Sigmoid colon (tissue), 7 donors: ENCODE measurements at regions of chr3 and their contacts with region 1.

Region 1: GRCh38 chr3:43621656-43622432 is at the start of gene ANO10:
- DNase-seq: peak; percentile 99
- H3K4me3 ChIP-seq: peak within 1 kb of the TSS; percentile 64 to 90 (median 83)
- H3K27ac ChIP-seq: peak within 1 kb of the TSS; percentile 82 to 92 (median 90)
- H3K4me1 ChIP-seq: peaks cover 0 to 16% (median 12%) of the 10 kb centered on the region in 4 donors
- H3K27me3 ChIP-seq: no peaks in the 10 kb centered on the region
- CTCF ChIP-seq: no peak
- EP300 ChIP-seq: no peak
- POLR2A ChIP-seq: peak; percentile 40
- total RNA-seq, gene ANO10: 14.5 to 30.5 (median 17.5) TPM

Region 2: DNA sequence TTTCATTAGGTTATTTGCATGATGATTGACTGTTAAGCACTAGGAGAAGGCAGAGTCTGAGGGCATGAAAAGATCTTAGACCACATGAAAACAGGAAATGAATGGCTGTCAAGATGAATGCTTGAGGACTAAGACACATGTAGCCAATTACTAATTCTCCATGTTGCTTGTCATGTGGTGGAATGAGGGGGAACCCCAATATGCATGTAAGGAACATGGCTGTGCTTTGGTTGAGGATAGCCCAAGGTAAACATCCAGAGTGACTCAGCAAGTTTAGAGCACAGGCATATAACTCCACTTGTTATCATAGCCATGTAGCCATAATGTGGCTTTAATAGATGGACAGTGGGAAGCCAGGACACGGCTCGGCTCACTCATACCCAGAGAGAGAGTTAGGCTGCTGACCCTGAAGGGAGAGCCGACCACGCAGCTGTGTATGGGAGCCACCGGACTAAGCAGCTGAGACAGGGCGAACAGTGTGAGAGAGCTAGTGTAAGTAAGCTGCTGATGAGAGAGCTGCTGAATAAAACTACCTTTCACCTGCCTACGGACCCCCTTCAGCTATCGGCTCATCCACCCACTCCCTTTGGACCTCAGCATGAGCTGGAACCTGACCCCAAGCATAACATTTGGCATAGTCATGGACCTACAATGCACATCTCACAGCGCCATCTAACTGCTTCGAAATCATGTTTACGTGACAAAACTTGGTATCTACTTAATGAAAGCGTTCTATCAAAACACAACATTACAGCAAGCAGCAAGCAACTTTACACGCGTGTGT is 37.6 kb before region 1 on chr3:
- intact Hi-C with region 1: loop called (anchors 5 kb)
- DNase-seq: no peak
- H3K4me3 ChIP-seq: no peak overlapping the region
- H3K27ac ChIP-seq: peak overlapping the region in 1 of 4 donors; percentile 70
- H3K4me1 ChIP-seq: peaks cover 0 to 27% (median 22%) of the 10 kb centered on the region in 4 donors
- H3K27me3 ChIP-seq: no peaks in the 10 kb centered on the region
- CTCF ChIP-seq: no peak
- EP300 ChIP-seq: no peak
- POLR2A ChIP-seq: no peak

Region 3: DNA sequence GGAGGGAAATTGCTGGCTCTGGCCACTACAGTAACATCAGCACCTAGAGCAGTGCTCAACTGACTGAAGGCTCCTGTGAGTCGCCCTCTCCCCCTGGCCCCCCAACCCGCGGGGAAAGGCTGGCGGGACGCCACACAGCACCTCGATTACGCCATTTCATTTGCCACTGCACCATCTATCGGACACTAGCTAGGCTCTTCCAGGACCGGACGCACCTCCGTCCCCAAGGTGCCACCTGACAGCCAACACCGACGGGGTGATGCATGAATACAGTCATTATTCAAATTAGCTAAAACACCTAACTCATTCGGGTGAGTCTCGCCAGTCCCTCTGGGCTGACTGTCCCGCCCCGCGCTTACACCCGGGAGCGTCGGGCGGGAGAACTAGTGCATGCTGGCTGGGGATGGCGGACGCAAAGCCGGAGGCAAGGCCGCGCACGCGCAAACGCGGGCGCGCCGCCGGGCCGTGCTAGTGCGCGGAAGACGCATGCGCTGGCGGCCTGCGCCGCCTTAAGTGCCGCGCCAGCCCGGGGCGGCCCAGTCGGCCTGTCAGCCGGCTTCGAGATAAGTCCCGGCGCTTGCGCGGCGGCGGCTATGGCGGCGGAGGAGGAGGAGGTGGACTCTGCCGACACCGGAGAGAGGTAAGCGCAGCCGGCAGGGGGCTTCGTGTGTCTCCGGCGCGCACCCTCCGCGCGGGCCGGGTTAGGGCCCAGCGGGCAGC is 68.7 kb after region 1 on chr3 and contains the start of gene ABHD5:
- intact Hi-C with region 1: loop called (anchors 2 kb)
- DNase-seq: peak; percentile 93
- H3K4me3 ChIP-seq: peak within 1 kb of the TSS; percentile 63 to 93 (median 88)
- H3K27ac ChIP-seq: peak within 1 kb of the TSS; percentile 89 to 94 (median 92)
- H3K4me1 ChIP-seq: peaks cover 0 to 31% (median 19%) of the 10 kb centered on the region in 4 donors
- H3K27me3 ChIP-seq: no peaks in the 10 kb centered on the region
- CTCF ChIP-seq: no peak
- EP300 ChIP-seq: no peak
- POLR2A ChIP-seq: peak; percentile 95 to 96
- total RNA-seq, gene ABHD5: 11.1 to 24.7 (median 22.3) TPM

Region 4: DNA sequence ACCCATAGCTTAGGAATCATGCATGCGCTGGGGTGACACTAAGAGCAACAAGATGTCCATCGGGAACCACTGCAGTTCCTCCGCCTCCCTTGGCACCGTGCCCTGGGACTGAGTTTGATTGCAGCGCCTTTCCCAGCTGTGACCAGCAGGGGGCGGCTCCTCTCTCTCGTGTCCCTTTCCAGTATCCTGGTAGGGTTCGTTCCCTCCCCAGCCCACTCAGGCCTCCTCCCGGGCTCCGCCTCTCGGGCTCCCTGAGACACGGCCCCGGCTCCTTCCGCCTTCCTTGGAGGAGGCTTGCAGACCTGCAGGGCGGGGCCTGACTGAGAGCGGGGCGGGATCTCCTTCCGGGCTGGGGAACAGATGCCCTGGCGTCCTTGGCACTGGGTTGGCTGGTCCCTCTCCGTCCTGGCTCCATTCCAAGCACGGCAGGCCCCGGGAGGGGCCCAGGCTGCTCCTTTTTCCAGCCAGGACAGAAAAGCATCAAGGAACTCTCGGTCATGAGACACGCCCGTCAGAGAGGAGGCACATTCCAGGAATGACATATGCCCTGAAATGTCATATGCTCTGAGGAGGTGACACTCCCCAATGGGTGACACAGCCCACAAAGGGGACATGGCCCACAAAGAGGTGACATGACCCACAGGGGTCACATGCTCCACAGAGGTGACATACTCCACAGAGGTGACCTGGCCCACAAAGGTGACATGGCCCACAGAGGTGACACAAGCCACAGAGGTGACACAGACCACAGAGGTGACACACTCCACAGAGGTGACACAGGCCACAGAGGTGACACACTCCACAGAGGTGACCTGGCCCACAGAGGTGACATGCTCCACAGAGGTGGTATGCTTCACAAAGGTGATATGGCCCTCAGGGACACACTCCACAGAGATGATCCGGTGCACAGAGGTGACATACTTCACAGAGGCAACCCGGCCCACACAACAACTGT is 147.9 kb after region 1 on chr3:
- intact Hi-C with region 1: loop called (anchors 5 kb)
- DNase-seq: peak; percentile 97
- H3K4me3 ChIP-seq: peak overlapping the region; percentile 6 to 42 (median 32)
- H3K27ac ChIP-seq: peak overlapping the region; percentile 55 to 73 (median 65)
- H3K4me1 ChIP-seq: peaks cover 0 to 30% (median 20%) of the 10 kb centered on the region in 4 donors
- H3K27me3 ChIP-seq: no peaks in the 10 kb centered on the region
- CTCF ChIP-seq: peak; percentile 71 to 88 (median 86)
- EP300 ChIP-seq: no peak
- POLR2A ChIP-seq: no peak

Region 5: DNA sequence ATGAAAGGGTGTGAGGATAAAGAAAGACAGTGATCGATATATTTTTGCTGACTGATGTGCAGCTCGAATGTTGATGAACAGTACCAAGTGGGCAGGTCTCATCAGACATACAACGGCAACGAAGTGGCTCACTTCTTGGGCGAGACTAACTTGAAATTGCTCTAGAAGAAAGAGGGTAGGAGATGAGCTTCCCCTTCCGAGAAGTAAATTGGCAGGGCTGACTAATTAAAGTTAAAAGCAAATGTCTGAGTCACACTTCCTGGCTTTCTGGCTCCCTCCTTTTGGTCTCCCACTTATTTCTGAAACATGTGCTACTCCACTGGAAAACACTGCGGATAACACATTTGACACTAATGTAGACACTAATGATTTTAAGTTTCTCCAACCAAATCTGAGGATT is 297.2 kb after region 1 on chr3:
- intact Hi-C with region 1: no loop called
- DNase-seq: no peak
- H3K4me3 ChIP-seq: no peak overlapping the region
- H3K27ac ChIP-seq: no peak overlapping the region
- H3K4me1 ChIP-seq: no peaks in the 10 kb centered on the region
- H3K27me3 ChIP-seq: peaks cover 0 to 29% (median 3%) of the 10 kb centered on the region in 3 donors
- CTCF ChIP-seq: no peak
- EP300 ChIP-seq: no peak
- POLR2A ChIP-seq: no peak